Ascending aorta (tissue), 2 donors: ENCODE measurements at regions of chr6 and their contacts with region 1.

Region 1: DNA sequence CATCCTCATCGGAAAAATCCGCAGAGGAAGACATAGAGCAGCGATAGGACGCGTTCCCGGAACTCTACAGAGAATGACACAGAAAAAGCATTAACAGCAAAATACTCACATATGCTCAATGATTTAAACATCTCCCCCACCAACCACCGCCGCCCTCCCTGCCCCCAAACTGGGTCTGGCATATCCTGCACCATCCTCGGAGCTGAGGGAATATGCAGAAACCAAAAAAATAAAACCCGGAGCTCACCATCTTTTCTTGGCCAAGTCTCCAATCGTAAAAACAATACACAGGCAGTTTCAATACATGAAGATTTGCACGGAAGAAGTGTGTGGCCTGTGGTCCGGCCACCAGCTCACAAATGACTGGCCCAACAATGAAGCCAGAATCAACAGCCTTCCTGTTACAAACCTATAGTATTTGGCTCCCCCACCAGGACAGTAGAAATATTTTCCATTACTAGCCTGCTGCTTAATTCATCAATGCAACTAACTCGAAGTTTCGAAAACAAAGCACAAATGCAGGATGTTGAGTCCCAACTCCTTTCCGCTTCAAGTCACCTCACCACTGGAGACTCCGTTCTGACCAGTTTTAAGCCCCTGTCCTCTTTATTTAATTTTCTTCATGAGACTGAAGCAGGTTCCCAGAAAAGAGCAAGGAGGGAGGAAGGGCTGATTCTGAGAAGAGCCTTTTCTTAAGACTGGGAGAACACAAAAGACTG is 103.2 kb upstream of the BEND6 start:
- DNase-seq: peak in 1 of 2 donors; percentile 77
- H3K4me3 ChIP-seq: peak overlapping the region; percentile 66 to 73
- H3K27ac ChIP-seq: peak overlapping the region; percentile 67 to 69
- H3K4me1 ChIP-seq: peaks cover 0 to 9% of the 10 kb centered on the region in 2 donors
- H3K27me3 ChIP-seq: no peaks in the 10 kb centered on the region
- CTCF ChIP-seq: peak; percentile 42 to 75 (median 69)

Region 2: GRCh38 chr6:56708810-56709597 is 142.7 kb before region 1 on chr6:
- intact Hi-C with region 1: loop called (anchors 2 kb)
- DNase-seq: no peak
- H3K4me3 ChIP-seq: peak overlapping the region in 1 of 2 donors; percentile 16
- H3K27ac ChIP-seq: peak overlapping the region; percentile 53 to 69
- H3K4me1 ChIP-seq: peaks cover 9 to 11% of the 10 kb centered on the region in 2 donors
- H3K27me3 ChIP-seq: no peaks in the 10 kb centered on the region
- CTCF ChIP-seq: peak; percentile 20 to 56 (median 44)

Region 3: GRCh38 chr6:56796196-56796532 is 55.5 kb before region 1 on chr6:
- intact Hi-C with region 1: loop called (anchors 2 kb)
- DNase-seq: no peak
- H3K4me3 ChIP-seq: no peak overlapping the region
- H3K27ac ChIP-seq: no peak overlapping the region
- H3K4me1 ChIP-seq: peaks cover 0 to 32% of the 10 kb centered on the region in 2 donors
- H3K27me3 ChIP-seq: no peaks in the 10 kb centered on the region
- CTCF ChIP-seq: no peak